PC-9 (cell line): ENCODE measurements at regions of chr10 and their contacts with region 1.

Region 1: GRCh38 chr10:72260588-72261322 is 13.0 kb upstream of the DDIT4 start:
- DNase-seq: peak; percentile 97 to 98
- H3K4me3 ChIP-seq: peak overlapping the region; percentile 63
- H3K27ac ChIP-seq: peak overlapping the region; percentile 97
- H3K4me1 ChIP-seq: peaks cover 76% of the 10 kb centered on the region
- H3K27me3 ChIP-seq: no peaks in the 10 kb centered on the region
- CTCF ChIP-seq: no peak

Region 2: GRCh38 chr10:71543608-71544170 is 717.1 kb before region 1 on chr10:
- CTCF ChIA-PET with region 1: no interaction called
- POLR2A ChIA-PET with region 1: interaction called, 12 read pairs
- intact Hi-C with region 1: no loop called
- DNase-seq: no peak
- H3K4me3 ChIP-seq: no peak overlapping the region
- H3K27ac ChIP-seq: no peak overlapping the region
- H3K4me1 ChIP-seq: no peaks in the 10 kb centered on the region
- H3K27me3 ChIP-seq: no peaks in the 10 kb centered on the region; the same call in 1 of the 2 replicates
- CTCF ChIP-seq: no peak

Region 3: DNA sequence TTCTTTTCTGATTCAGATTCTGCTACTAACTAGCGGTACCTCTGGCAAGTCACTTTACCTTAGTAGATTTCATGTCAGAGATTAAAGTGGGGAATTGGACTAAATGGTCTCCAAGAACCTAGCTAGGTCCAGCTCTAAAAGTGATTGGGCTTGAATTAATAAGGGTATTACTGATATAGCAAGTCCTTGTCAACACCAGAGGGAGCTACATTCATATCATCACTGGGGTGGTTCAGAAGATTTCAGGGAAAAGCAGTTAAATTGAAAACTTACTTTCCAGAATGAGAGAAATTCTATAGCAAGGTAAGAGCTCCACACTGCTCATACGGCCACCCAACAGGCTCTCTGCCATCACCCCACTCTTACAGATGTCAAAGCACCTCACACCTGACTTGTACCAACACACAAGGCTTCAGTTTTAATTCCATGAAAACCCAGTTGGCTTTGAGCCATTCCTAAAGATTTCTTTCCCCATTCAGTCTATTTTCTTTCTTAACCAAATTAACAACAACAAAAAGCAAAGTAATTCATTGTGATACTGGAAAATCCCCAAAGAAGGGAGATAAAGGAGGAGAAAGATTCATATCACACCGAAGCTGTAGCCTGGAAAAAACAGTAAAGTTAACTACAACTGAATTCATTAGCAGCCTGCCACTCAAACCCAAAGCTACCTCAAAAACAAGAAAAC is 134.4 kb before region 1 on chr10:
- CTCF ChIA-PET with region 1: no interaction called
- POLR2A ChIA-PET with region 1: interaction called, 11 read pairs
- intact Hi-C with region 1: no loop called
- DNase-seq: no peak
- H3K4me3 ChIP-seq: no peak overlapping the region
- H3K27ac ChIP-seq: no peak overlapping the region
- H3K4me1 ChIP-seq: no peaks in the 10 kb centered on the region
- H3K27me3 ChIP-seq: no peaks in the 10 kb centered on the region
- CTCF ChIP-seq: peak; percentile 71

Region 4: DNA sequence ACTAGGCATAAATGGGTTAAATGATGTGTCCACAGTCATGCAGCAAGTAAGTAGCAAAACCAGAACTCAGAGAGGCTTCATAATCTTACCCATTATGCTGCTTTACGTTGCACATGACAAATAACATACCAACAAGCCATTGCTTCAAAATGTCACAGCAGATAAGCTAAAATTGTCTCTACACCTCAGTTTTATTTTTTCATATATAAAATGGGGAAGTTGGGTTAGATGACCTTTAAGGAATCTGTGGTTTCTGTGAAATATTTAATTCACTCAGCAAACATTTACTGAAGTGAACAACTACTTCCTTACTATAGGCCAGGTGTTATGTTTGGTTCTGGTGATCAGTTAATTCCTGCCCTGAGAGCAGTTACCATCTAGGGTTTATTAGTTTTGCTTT is 42.4 kb before region 1 on chr10:
- CTCF ChIA-PET with region 1: no interaction called
- POLR2A ChIA-PET with region 1: no interaction called
- intact Hi-C with region 1: no loop called
- DNase-seq: no peak
- H3K4me3 ChIP-seq: peak overlapping the region; percentile 17; the same call in 1 of the 2 replicates
- H3K27ac ChIP-seq: peak overlapping the region; percentile 48
- H3K4me1 ChIP-seq: peaks cover 43% of the 10 kb centered on the region
- H3K27me3 ChIP-seq: no peaks in the 10 kb centered on the region
- CTCF ChIP-seq: no peak

Region 5: GRCh38 chr10:72248468-72249151 is 12.1 kb before region 1 on chr10:
- CTCF ChIA-PET with region 1: interaction called, 7 read pairs
- POLR2A ChIA-PET with region 1: no interaction called
- intact Hi-C with region 1: loop called (anchors 1 kb)
- DNase-seq: peak; percentile 52 to 79
- H3K4me3 ChIP-seq: no peak overlapping the region
- H3K27ac ChIP-seq: peak overlapping the region; percentile 48
- H3K4me1 ChIP-seq: peaks cover 53% of the 10 kb centered on the region
- H3K27me3 ChIP-seq: no peaks in the 10 kb centered on the region
- CTCF ChIP-seq: no peak

Region 6: GRCh38 chr10:72354478-72355213 is 93.9 kb after region 1 on chr10 and contains the start of gene DNAJB12:
- CTCF ChIA-PET with region 1: no interaction called
- POLR2A ChIA-PET with region 1: no interaction called
- intact Hi-C with region 1: no loop called
- DNase-seq: peak; percentile 90 to 92
- H3K4me3 ChIP-seq: peak within 1 kb of the TSS; percentile 85
- H3K27ac ChIP-seq: peak within 1 kb of the TSS; percentile 90
- H3K4me1 ChIP-seq: peaks cover 16% of the 10 kb centered on the region
- H3K27me3 ChIP-seq: no peaks in the 10 kb centered on the region
- CTCF ChIP-seq: no peak
- total RNA-seq, gene DNAJB12: 37.0 and 46.9 TPM in 2 replicates